Dorsolateral prefrontal cortex (tissue), 120 donors: ENCODE measurements at regions of chr17 and their contacts with region 1.

Region 1: GRCh38 chr17:28973425-28973824 is 22.1 kb upstream of the PHF12 start:
- DNase-seq: peak in 1 of 10 donors; percentile 49
- H3K4me3 ChIP-seq: no peak overlapping the region
- H3K27ac ChIP-seq: no peak overlapping the region
- H3K27me3 ChIP-seq: no peaks in the 10 kb centered on the region
- CTCF ChIP-seq: no peak

Region 2: GRCh38 chr17:29005936-29006511 is 32.6 kb after region 1 on chr17 and contains the start of gene SEZ6:
- intact Hi-C with region 1: no loop called
- DNase-seq: peak; percentile 78 to 93 (median 86)
- H3K4me3 ChIP-seq: peak within 1 kb of the TSS; percentile 38 to 78 (median 61)
- H3K27ac ChIP-seq: peak within 1 kb of the TSS in 20 of 59 donors; percentile 2 to 87 (median 50)
- H3K27me3 ChIP-seq: peaks cover 0 to 7% (median 0%) of the 10 kb centered on the region in 45 donors
- CTCF ChIP-seq: peak in 41 of 56 donors; percentile 14 to 52 (median 30)
- total RNA-seq, gene SEZ6: 10.5 to 57.6 (median 32.5) TPM

Region 3: DNA sequence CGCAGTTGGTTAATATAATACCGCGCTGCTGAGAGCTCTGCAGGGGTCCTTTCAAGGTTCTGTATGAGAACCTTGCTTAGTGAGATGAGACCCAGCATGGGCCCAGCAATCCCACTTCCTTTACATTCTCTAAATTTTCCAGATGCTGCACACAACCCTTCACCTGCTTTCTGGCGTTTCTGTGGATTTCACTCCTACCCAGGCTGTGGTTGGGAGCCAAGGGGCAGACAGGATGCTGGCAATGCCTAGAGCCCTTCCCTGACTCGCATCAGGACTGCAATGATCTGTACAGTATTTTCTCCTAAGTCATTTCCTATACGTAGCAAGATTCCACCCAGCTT is 59.4 kb after region 1 on chr17:
- intact Hi-C with region 1: loop called in 1 of 2 experiments (anchors 5 kb)
- DNase-seq: no peak
- H3K4me3 ChIP-seq: no peak overlapping the region
- H3K27ac ChIP-seq: no peak overlapping the region
- H3K27me3 ChIP-seq: no peaks in the 10 kb centered on the region
- CTCF ChIP-seq: no peak

Region 4: DNA sequence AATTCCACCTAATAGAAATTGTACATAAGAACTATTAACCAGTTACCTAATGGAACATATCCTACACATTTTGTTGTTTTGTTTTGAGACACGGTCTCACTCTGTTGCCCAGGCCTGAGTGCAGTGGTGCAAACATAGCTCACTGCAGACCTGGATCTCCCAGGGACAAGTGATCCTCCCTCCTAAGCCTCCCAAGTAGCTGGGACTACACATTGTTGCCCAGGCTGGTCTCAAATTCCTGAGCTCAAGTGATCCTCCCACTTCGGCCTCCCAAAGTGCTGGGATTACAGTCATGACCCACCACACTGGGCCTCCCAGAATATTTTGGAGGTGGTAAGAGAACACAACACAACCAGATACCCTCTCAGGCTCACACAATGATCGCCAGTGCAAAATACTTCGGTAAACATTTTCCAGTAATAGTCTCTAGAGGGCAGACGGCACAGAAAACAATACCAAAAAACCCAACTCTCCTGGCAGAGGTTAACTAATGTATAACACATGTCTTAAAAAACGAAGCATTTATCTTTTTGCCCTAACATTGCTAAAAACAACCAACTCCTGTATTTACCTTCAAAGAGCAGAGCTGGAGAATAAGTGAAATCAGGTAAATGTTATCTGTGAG is 310.0 kb after region 1 on chr17:
- intact Hi-C with region 1: loop called in 1 of 2 experiments (anchors 10 kb)
- DNase-seq: no peak
- H3K4me3 ChIP-seq: peak overlapping the region in 38 of 59 donors; percentile 1 to 51 (median 20)
- H3K27ac ChIP-seq: peak overlapping the region in 28 of 59 donors; percentile 3 to 71 (median 33)
- H3K27me3 ChIP-seq: no peaks in the 10 kb centered on the region
- CTCF ChIP-seq: peak in 28 of 56 donors; percentile 5 to 45 (median 26)